Caco-2 (cell line): ENCODE measurements at regions of chr5 and their contacts with region 1.

Region 1: GRCh38 chr5:57137401-57137800 is 36.5 kb upstream of the GPBP1 start:
- DNase-seq: no peak
- H3K4me3 ChIP-seq: no peak overlapping the region
- H3K4me3 Mint-ChIP-seq: no peak overlapping the region
- H3K27ac Mint-ChIP-seq: no peak overlapping the region
- H3K4me1 ChIP-seq: no peaks in the 10 kb centered on the region
- H3K4me1 Mint-ChIP-seq: no peaks in the 10 kb centered on the region
- H3K27me3 ChIP-seq: no peaks in the 10 kb centered on the region
- H3K27me3 Mint-ChIP-seq: no peaks in the 10 kb centered on the region
- CTCF ChIP-seq: no peak

Region 2: GRCh38 chr5:56909294-56910209 is 227.8 kb before region 1 on chr5 and contains the start of gene SETD9:
- CTCF ChIA-PET with region 1: interaction called, 5 read pairs
- POLR2A ChIA-PET with region 1: no interaction called
- intact Hi-C with region 1: loop called (anchors 2 kb)
- DNase-seq: peak; percentile 97 to 99
- H3K4me3 ChIP-seq: peak within 1 kb of the TSS; percentile 85
- H3K4me3 Mint-ChIP-seq: peak within 1 kb of the TSS; percentile 96
- H3K27ac Mint-ChIP-seq: peak within 1 kb of the TSS; percentile 94
- H3K4me1 ChIP-seq: no peaks in the 10 kb centered on the region
- H3K4me1 Mint-ChIP-seq: no peaks in the 10 kb centered on the region
- H3K27me3 ChIP-seq: no peaks in the 10 kb centered on the region
- H3K27me3 Mint-ChIP-seq: no peaks in the 10 kb centered on the region
- CTCF ChIP-seq: no peak
- total RNA-seq, gene SETD9: 10.5 and 13.1 TPM in 2 replicates

Region 3: GRCh38 chr5:57007344-57007743 is 130.1 kb before region 1 on chr5:
- CTCF ChIA-PET with region 1: interaction called, 11 read pairs
- POLR2A ChIA-PET with region 1: no interaction called
- intact Hi-C with region 1: no loop called
- DNase-seq: no peak
- H3K4me3 ChIP-seq: no peak overlapping the region
- H3K4me3 Mint-ChIP-seq: no peak overlapping the region
- H3K27ac Mint-ChIP-seq: no peak overlapping the region
- H3K4me1 ChIP-seq: peaks cover 30% of the 10 kb centered on the region
- H3K4me1 Mint-ChIP-seq: peaks cover 19% of the 10 kb centered on the region
- H3K27me3 ChIP-seq: no peaks in the 10 kb centered on the region
- H3K27me3 Mint-ChIP-seq: no peaks in the 10 kb centered on the region
- CTCF ChIP-seq: no peak

Region 4: DNA sequence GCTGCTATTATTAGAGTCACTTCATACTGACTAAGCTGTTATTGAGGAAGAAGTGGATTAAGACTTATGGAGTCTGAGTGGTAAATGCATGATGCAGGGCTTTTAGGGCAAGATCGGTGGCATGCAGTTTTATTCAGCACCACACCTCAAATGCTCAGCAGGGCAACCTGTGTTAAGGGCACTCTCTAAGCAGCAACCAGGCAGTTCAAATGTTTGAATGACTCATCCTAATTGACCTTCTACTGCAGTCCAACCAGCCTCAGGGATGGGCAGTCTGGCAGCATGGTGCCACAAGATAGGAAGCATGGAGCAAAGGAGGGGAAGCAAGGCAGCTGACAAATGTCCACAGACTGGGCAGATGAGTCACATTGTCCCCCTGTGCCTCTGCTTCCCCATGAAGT is 105.2 kb before region 1 on chr5:
- CTCF ChIA-PET with region 1: no interaction called
- POLR2A ChIA-PET with region 1: no interaction called
- intact Hi-C with region 1: no loop called
- DNase-seq: no peak
- H3K4me3 ChIP-seq: no peak overlapping the region
- H3K4me3 Mint-ChIP-seq: no peak overlapping the region
- H3K27ac Mint-ChIP-seq: no peak overlapping the region
- H3K4me1 ChIP-seq: no peaks in the 10 kb centered on the region; the same call in 1 of the 2 replicates
- H3K4me1 Mint-ChIP-seq: peaks cover 7% of the 10 kb centered on the region
- H3K27me3 ChIP-seq: no peaks in the 10 kb centered on the region
- H3K27me3 Mint-ChIP-seq: no peaks in the 10 kb centered on the region
- CTCF ChIP-seq: no peak

Region 5: DNA sequence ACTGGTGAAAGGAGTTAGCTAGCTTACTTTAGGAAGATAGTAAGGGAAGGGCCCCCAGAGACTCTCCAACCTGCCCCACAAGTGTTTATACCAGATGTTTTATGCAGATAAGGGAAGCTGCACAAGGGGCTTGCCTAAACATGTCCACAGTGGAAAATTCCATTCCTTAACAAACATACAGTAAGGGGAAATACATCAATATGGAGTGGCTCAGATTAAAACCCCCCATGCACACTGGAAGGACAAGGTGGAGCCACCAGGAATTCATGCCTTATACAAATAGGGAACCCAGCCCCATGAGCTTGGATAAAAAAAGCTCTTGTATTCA is 69.8 kb before region 1 on chr5:
- CTCF ChIA-PET with region 1: no interaction called
- POLR2A ChIA-PET with region 1: no interaction called
- intact Hi-C with region 1: no loop called
- DNase-seq: no peak
- H3K4me3 ChIP-seq: no peak overlapping the region
- H3K4me3 Mint-ChIP-seq: no peak overlapping the region
- H3K27ac Mint-ChIP-seq: no peak overlapping the region
- H3K4me1 ChIP-seq: peaks cover 29% of the 10 kb centered on the region
- H3K4me1 Mint-ChIP-seq: peaks cover 21% of the 10 kb centered on the region
- H3K27me3 ChIP-seq: no peaks in the 10 kb centered on the region
- H3K27me3 Mint-ChIP-seq: no peaks in the 10 kb centered on the region
- CTCF ChIP-seq: no peak

Region 6: GRCh38 chr5:57094753-57095683 is 42.4 kb before region 1 on chr5:
- CTCF ChIA-PET with region 1: interaction called, 4 read pairs
- POLR2A ChIA-PET with region 1: no interaction called
- intact Hi-C with region 1: loop called (anchors 2 kb)
- DNase-seq: peak; percentile 59 to 82
- H3K4me3 ChIP-seq: no peak overlapping the region
- H3K4me3 Mint-ChIP-seq: no peak overlapping the region
- H3K27ac Mint-ChIP-seq: peak overlapping the region; percentile 70
- H3K4me1 ChIP-seq: peaks cover 12% of the 10 kb centered on the region
- H3K4me1 Mint-ChIP-seq: peaks cover 16% of the 10 kb centered on the region
- H3K27me3 ChIP-seq: no peaks in the 10 kb centered on the region
- H3K27me3 Mint-ChIP-seq: no peaks in the 10 kb centered on the region
- CTCF ChIP-seq: peak; percentile 33 to 34

Region 7: GRCh38 chr5:57124014-57124413 is 13.4 kb before region 1 on chr5:
- CTCF ChIA-PET with region 1: no interaction called
- POLR2A ChIA-PET with region 1: no interaction called
- intact Hi-C with region 1: no loop called
- DNase-seq: no peak
- H3K4me3 ChIP-seq: no peak overlapping the region
- H3K4me3 Mint-ChIP-seq: no peak overlapping the region
- H3K27ac Mint-ChIP-seq: no peak overlapping the region
- H3K4me1 ChIP-seq: no peaks in the 10 kb centered on the region
- H3K4me1 Mint-ChIP-seq: no peaks in the 10 kb centered on the region
- H3K27me3 ChIP-seq: no peaks in the 10 kb centered on the region
- H3K27me3 Mint-ChIP-seq: no peaks in the 10 kb centered on the region
- CTCF ChIP-seq: no peak

Region 8: GRCh38 chr5:57366744-57367143 is 229.3 kb after region 1 on chr5:
- CTCF ChIA-PET with region 1: no interaction called
- POLR2A ChIA-PET with region 1: no interaction called
- intact Hi-C with region 1: no loop called
- DNase-seq: peak; percentile 53 to 55
- H3K4me3 ChIP-seq: no peak overlapping the region
- H3K4me3 Mint-ChIP-seq: no peak overlapping the region
- H3K27ac Mint-ChIP-seq: no peak overlapping the region
- H3K4me1 ChIP-seq: peaks cover 26% of the 10 kb centered on the region
- H3K4me1 Mint-ChIP-seq: no peaks in the 10 kb centered on the region
- H3K27me3 ChIP-seq: no peaks in the 10 kb centered on the region
- H3K27me3 Mint-ChIP-seq: no peaks in the 10 kb centered on the region
- CTCF ChIP-seq: no peak